Vagina (tissue), 2 donors: ENCODE measurements at regions of chr12 and their contacts with region 1.

Region 1: DNA sequence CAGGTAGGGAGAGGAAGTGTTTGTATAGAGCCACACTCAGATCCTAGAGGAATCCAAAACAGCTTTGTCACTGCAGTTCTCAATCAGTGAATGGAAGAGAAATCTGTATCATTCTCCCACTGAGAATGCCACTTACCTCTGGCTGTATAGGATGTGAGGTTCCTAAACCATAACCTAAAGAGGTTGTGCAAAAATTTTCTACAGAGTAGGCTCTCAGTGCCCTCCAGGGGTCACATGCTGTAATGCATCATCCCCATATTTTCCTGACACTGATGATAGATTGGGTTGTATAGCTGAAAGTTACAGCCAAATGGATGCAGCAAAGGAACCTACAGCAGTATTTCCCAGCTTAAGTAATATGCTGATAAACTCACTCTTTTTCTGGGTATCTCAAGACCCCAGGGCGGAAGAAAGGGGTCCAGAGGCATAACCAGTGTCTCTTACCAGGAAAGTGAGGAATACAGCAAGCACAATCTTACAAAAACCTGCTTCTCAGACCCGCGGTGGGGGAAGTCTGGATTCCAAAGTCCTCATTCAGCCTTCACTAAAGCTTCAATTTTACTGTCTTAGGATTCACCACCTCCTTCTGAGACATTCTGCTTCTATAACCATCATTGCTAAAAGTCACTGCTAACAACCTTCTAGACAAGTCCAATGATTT is 3.8 kb downstream of the BCDIN3D start:
- DNase-seq: no peak
- H3K4me3 ChIP-seq: no peak overlapping the region
- H3K27ac ChIP-seq: no peak overlapping the region
- H3K4me1 ChIP-seq: peaks cover 20% of the 10 kb centered on the region
- H3K27me3 ChIP-seq: no peaks in the 10 kb centered on the region
- CTCF ChIP-seq: peak in 2 of 3 experiments; percentile 15 to 35
- POLR2A ChIP-seq: no peak

Region 2: GRCh38 chr12:49687941-49688340 is 151.2 kb before region 1 on chr12:
- intact Hi-C with region 1: no loop called
- DNase-seq: no peak
- H3K4me3 ChIP-seq: no peak overlapping the region
- H3K27ac ChIP-seq: no peak overlapping the region
- H3K4me1 ChIP-seq: no peaks in the 10 kb centered on the region
- H3K27me3 ChIP-seq: no peaks in the 10 kb centered on the region
- CTCF ChIP-seq: no peak
- POLR2A ChIP-seq: no peak

Region 3: GRCh38 chr12:49776413-49776812 is 62.7 kb before region 1 on chr12:
- intact Hi-C with region 1: loop called (anchors 5 kb)
- DNase-seq: no peak
- H3K4me3 ChIP-seq: no peak overlapping the region
- H3K27ac ChIP-seq: no peak overlapping the region
- H3K4me1 ChIP-seq: peaks cover 9% of the 10 kb centered on the region
- H3K27me3 ChIP-seq: no peaks in the 10 kb centered on the region
- CTCF ChIP-seq: peak; percentile 63 to 82 (median 77)
- POLR2A ChIP-seq: no peak